ENCODE measurements at regions of chr5 and their contacts with region 1.

Region 1: GRCh38 chr5:169695919-169696490 is 58.9 kb downstream of the DOCK2 start:
- ATAC-seq: peak; percentile 94 to 98 (median 96)
- H3K4me3 ChIP-seq: no peak overlapping the region
- H3K27ac ChIP-seq: no peak overlapping the region
- H3K4me1 ChIP-seq: peaks cover 0 to 14% of the 10 kb centered on the region in 2 donors

Region 2: DNA sequence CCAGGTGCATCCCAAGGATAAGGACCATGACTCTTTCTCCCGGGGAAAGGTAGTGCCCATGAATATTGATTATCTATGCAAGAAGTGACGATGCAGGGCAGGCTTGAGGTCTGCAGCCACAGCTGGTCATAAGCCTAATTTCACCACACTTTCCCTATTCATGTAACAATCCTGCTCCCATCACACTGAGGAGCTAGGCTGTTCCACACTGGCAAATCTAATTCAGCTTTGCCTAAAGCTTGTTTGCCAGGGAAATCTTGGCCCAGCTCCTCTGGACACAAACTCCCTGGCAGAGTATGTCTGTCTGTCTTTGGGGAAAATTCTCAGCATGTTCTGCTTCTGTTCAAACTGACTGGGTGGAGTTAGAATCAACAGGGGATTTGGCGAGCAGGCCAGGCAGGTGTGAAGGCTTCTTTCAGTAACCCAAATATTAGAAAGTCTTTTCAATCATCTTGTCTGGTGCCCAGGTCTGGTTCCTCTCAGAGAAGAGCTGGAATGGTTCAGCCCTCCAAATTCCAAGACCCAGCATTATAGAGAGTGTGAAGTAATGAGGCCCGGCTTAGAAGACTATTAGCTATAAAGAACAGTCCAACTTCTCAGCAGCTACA is 201.0 kb before region 1 on chr5:
- in situ Hi-C with region 1: no loop called
- ATAC-seq: peak in 2 of 8 experiments; percentile 78 to 84
- H3K4me3 ChIP-seq: no peak overlapping the region
- H3K27ac ChIP-seq: no peak overlapping the region
- H3K4me1 ChIP-seq: no peaks in the 10 kb centered on the region

Region 3: DNA sequence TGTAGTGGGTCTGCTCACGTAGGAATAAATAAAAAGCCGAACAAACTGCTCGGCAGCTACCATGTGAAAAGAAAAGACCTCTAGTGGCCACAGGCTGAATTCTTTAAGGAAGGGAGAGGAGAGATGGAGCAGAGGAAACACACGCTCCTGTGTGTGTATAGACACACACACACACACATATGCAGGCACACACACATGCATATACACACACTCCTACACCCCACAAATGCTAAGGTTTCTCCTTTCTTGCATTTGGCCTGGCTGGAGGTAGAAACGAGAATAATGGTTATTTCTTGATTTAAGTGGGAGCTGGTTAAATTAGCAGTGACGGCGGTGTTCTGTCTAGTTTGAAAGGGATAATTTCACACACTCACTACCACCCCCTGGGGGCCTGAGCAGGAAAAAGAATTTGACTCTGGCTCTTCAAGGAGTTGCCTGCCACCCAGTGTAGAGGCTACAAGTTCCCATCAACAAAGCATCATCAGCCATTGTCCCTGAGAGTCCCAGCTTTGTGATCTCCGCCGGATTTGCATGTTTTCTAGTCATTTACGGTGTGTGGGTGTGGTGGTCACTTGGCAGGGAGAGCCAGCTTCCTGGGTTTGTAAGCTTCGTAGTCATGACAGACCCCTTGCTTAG is 284.5 kb after region 1 on chr5 and contains the start of gene INSYN2B:
- in situ Hi-C with region 1: loop called in 1 of 9 experiments (anchors 10 kb)
- ATAC-seq: peak; percentile 72 to 91 (median 84)
- H3K4me3 ChIP-seq: peak within 1 kb of the TSS; percentile 25 to 39 (median 28)
- H3K27ac ChIP-seq: peak within 1 kb of the TSS in 1 of 2 donors; percentile 17
- H3K4me1 ChIP-seq: peaks cover 31 to 34% of the 10 kb centered on the region in 2 donors
- total RNA-seq, gene INSYN2B: 0.29 to 21.2 (median 5.0) TPM

Region 4: GRCh38 chr5:170216266-170216864 is 520.4 kb after region 1 on chr5:
- in situ Hi-C with region 1: loop called in 1 of 9 experiments (anchors 25 kb)
- ATAC-seq: peak; percentile 68 to 84 (median 78)
- H3K4me3 ChIP-seq: no peak overlapping the region
- H3K27ac ChIP-seq: no peak overlapping the region
- H3K4me1 ChIP-seq: peaks cover 16 to 19% of the 10 kb centered on the region in 2 donors

Measured in motor neuron (in vitro differentiated cells).